ENCODE measurements at regions of chr4 and their contacts with region 1.

Region 1: GRCh38 chr4:138182838-138183426 is 59.2 kb downstream of the SLC7A11 start:
- DNase-seq: peak; percentile 65
- ATAC-seq: peak; percentile 24
- H3K4me3 ChIP-seq: no peak overlapping the region
- H3K4me3 Mint-ChIP-seq: no peak overlapping the region
- H3K27ac ChIP-seq: no peak overlapping the region
- H3K27ac Mint-ChIP-seq: no peak overlapping the region
- H3K4me1 ChIP-seq: no peaks in the 10 kb centered on the region
- H3K4me1 Mint-ChIP-seq: no peaks in the 10 kb centered on the region
- H3K27me3 ChIP-seq: no peaks in the 10 kb centered on the region
- H3K27me3 Mint-ChIP-seq: peaks cover 9% of the 10 kb centered on the region
- CTCF ChIP-seq: peak; percentile 84

Region 2: DNA sequence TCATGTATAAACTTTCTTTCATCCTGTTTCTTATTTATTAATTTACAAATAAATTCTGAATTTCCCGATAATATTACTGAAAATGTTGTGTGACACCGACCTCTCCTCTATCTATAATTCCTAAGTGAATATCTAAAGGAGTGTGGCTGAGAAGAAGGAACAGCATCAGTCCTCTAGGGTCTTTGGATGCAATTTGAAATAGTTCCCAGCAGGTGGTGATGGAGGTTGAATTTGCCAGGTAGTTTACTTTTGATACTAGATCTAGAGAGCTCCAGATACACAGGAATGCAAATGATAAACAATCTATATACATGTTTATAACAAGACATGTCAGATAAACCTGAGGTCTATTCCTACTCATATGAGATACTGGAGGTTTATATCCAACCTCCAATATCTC is 956.0 kb before region 1 on chr4:
- CTCF ChIA-PET with region 1: no interaction called
- POLR2A ChIA-PET with region 1: no interaction called
- intact Hi-C with region 1: loop called (anchors 10 kb)
- DNase-seq: no peak
- ATAC-seq: no peak
- H3K4me3 ChIP-seq: no peak overlapping the region
- H3K4me3 Mint-ChIP-seq: no peak overlapping the region
- H3K27ac ChIP-seq: no peak overlapping the region
- H3K27ac Mint-ChIP-seq: no peak overlapping the region
- H3K4me1 ChIP-seq: no peaks in the 10 kb centered on the region
- H3K4me1 Mint-ChIP-seq: no peaks in the 10 kb centered on the region
- H3K27me3 ChIP-seq: no peaks in the 10 kb centered on the region
- H3K27me3 Mint-ChIP-seq: no peaks in the 10 kb centered on the region
- CTCF ChIP-seq: no peak

Region 3: GRCh38 chr4:138090150-138090917 is 92.6 kb before region 1 on chr4:
- CTCF ChIA-PET with region 1: interaction called, 8 read pairs
- POLR2A ChIA-PET with region 1: no interaction called
- intact Hi-C with region 1: loop called (anchors 5 kb)
- DNase-seq: peak; percentile 59
- ATAC-seq: peak; percentile 67
- H3K4me3 ChIP-seq: no peak overlapping the region
- H3K4me3 Mint-ChIP-seq: no peak overlapping the region
- H3K27ac ChIP-seq: no peak overlapping the region
- H3K27ac Mint-ChIP-seq: no peak overlapping the region
- H3K4me1 ChIP-seq: no peaks in the 10 kb centered on the region
- H3K4me1 Mint-ChIP-seq: no peaks in the 10 kb centered on the region
- H3K27me3 ChIP-seq: peaks cover 0 to 5% (median 0%) of the 10 kb centered on the region in 4 experiments
- H3K27me3 Mint-ChIP-seq: peaks cover 29% of the 10 kb centered on the region
- CTCF ChIP-seq: peak; percentile 90